Sciatic nerve (tissue), 2 donors: ENCODE measurements at regions of chr14 and their contacts with region 1.

Region 1: DNA sequence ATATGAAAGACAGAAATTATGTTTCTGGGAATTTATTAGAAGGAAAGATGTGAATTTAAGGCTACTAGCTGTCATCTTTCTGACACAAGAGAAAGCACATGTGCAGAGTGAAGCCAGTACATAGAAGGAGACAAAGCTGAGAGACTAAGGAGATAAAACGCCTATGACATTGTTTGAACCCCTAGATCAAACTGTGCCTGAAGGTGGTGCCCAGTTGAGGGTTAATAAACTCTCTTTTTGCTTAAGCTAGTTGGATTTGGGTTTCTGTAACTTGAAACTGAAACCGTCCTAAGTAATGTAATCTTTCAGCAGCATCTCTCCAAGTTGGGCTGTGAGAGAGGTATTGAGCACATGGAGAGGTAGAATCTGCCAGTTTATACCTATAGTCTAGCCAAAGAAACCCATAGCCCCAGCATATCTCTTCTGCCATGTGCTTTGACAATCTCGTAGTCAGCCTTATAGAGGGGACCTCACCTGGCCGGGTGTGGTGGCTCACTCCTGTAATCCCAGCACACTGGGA is 84.2 kb downstream of the LRRC74A start:
- DNase-seq: no peak
- ATAC-seq: no peak

Region 2: GRCh38 chr14:77053046-77053841 is 142.8 kb after region 1 on chr14:
- intact Hi-C with region 1: loop called (anchors 5 kb)
- DNase-seq: peak; percentile 86
- ATAC-seq: peak; percentile 75

Region 3: DNA sequence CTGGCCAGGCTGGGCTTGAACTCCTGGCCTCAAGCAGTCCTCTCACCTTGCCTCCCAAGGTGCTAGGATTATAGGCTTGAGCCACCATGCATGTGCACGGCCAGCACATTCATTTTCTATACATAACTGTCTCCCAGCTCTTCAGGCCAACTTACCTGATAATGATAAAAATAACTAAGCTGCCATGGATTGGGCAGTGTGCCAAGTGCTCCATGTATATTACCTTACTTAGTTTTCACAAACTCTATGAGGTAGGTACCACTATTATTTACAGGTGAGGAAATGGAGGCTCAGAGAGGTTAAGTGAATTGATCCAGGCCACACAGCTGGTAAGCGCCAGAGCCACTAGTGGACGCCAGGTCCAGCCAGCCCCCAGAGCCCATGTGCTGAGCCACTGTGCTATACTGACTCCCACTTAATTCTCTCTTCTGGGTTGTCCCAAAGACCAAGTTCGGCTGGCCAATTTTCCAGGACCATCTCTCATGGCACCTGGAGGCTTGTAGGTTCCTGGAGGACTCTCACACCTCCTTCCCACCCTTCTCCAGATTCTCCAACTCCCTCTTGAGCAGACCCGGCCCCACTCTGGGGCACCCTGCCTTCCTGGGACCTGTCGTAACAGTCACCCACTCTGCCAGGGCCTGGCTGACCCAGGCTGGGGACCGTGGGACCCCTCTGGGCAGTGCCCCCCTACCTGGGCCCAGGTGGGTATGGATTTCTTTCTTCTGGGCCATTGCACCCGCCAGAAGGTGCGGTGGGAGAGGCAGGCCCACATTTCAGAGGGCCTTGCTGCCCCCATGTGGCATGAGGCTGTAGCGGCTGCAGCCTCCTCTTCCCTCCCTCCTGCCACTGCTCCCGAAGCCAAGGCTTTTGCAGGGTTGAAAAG is 157.4 kb after region 1 on chr14:
- intact Hi-C with region 1: loop called (anchors 5 kb)
- DNase-seq: peak; percentile 84
- ATAC-seq: peak; percentile 85